Sciatic nerve (tissue), 2 donors: ENCODE measurements at regions of chr15 and their contacts with region 1.

Region 1: GRCh38 chr15:71599418-71600151 is 210.8 kb upstream of the NR2E3 start:
- DNase-seq: no peak
- ATAC-seq: no peak

Region 2: GRCh38 chr15:70584838-70585706 is 1014.5 kb before region 1 on chr15:
- intact Hi-C with region 1: no loop called
- DNase-seq: no peak
- ATAC-seq: peak; percentile 59

Region 3: DNA sequence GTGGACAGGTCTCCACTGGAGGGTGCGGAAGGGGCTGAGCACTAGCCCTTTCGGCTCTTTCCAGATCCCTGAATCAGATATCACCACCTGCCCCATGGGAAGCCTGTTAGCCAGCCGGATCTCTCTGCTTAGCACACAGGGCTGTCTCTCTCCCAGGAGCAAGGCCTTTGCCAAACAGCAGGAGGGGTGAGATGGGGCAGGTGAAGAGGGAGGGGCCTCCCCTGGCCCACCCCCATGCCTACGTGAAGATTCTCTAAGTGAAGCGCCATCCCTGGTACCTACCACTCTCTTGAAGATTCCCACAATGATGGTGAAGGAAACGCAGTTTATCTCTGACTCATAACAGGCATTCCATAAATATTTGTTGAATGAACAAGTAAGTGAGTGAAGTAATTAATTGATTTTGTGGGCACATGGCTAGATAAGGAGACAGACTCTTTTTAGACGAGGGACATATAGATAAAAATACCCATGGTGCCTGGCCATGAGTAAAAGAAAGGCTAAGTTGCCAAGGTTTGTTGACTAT is 1788.7 kb after region 1 on chr15:
- intact Hi-C with region 1: loop called (anchors 5 kb)
- DNase-seq: peak; percentile 18
- ATAC-seq: no peak